ENCODE measurements at regions of chr10 and their contacts with region 1.

Region 1: DNA sequence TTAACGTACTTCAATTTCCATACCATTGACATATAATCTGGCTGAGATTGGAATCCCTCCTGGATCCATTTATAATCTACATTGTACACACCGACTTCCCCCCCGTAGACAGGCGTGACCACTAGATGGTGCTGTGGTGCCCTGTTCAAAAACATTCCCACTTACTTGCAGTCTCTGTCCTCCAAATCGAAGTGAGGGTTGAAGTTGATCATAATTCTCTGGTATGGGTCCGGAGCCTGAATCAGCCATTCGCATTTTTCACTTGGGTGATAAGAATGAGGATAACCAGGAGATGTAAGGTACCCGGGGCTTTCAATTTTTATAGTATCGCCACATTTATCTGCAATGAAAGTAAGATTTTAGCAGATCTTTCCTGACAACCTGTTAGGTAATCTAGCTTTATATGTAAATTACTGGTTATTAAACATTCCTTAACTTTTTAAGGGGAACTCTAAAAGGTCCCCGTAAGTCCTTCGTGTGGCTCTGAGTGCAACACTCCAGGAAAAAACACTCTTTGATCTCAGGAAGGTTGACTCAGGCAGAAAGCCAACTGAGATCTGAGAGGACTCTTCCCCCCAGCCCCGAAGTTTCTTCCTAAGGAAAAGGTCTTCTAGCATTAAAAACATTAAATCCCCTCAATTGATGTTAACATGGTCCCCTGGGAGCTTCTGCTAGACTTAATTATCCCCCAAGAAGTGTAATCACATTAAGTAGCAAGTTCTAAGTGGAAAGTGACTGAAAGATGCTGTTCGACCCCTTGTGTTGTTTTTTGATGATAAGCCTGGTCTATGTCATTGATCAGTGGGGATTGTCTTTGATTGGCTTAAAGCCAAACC is 3.7 kb downstream of the NRP1 start:
- DNase-seq: peak; percentile 85
- ATAC-seq: peak in 1 of 2 donors; percentile 14

Region 2: GRCh38 chr10:32713560-32713959 is 617.2 kb before region 1 on chr10:
- intact Hi-C with region 1: no loop called
- DNase-seq: no peak
- ATAC-seq: no peak

Region 3: DNA sequence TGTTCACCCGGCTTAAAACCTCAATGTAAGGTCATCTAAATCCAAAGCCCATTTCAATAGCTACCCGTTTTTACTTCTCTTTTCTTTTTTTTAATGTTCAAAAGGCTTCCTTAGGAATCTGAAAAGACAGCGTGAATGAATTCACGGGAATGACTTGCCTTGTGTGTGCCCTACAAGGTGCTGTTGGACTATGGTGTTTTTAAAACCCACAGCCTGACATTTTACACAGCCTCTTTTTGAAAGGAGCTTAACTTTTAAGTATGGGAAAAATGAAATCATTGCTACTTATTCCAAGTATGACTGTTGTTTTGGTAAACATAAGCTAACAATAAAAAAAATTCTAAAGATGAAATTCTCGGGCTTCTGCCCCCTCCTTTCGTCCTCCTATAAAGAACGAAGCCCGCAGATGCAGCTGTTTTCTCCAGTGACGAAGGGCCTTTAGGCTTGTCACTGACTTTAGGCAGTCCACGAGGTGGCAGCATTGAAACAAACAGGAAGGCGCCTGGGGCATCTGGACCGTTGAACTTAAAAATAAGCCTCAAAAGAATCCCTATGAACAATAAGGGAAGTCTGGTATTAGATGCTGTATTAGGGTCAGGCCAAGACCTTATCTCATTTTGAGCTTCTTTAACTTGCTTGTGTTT is 137.6 kb before region 1 on chr10:
- intact Hi-C with region 1: loop called in 1 of 2 experiments (anchors 2 kb)
- DNase-seq: peak; percentile 88
- ATAC-seq: peak; percentile 87 to 88

Region 4: GRCh38 chr10:33277135-33277536 is 53.6 kb before region 1 on chr10:
- intact Hi-C with region 1: loop called in 1 of 2 experiments (anchors 2 kb)
- DNase-seq: peak; percentile 82
- ATAC-seq: peak; percentile 23 to 72

Region 5: DNA sequence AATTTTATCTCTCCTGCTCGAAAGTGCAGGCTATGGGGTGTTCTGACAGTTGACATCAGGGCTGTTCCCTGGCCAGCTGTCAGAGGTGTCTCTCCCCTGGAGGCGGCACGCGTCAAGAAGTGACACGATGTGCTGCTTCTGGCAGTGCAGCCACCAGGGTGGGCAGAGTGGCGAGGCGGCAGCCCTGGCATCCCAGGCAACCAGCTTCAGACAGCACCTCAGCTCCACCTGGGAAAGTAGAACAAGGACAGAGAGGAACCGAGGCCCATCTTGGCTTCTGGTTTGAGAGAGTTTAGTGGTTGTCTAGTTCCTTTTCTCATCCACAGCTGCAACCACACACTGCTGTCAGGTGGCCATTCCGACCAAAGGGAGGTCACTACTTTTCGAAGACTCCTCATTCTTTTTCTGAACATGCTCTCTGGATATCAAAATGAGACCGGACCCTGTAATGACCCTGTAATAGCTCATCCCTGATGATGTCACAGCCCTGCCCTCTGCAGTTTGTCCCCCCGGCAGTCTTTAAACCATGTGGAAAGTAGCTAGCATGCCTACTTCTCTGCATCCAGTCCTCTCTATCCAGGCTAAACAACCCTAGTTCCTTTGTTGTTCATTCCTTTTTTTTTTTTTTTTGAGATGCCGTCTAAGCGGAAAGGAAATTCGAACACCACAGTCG is 384.7 kb after region 1 on chr10:
- intact Hi-C with region 1: loop called in 1 of 2 experiments (anchors 5 kb)
- DNase-seq: peak; percentile 37
- ATAC-seq: peak; percentile 78 to 90

Region 6: GRCh38 chr10:33801748-33802147 is 471.0 kb after region 1 on chr10:
- intact Hi-C with region 1: loop called (anchors 10 kb)
- DNase-seq: no peak
- ATAC-seq: no peak

Region 7: GRCh38 chr10:34637418-34637911 is 1306.7 kb after region 1 on chr10:
- intact Hi-C with region 1: loop called in 1 of 2 experiments (anchors 5 kb)
- DNase-seq: peak; percentile 67
- ATAC-seq: peak; percentile 59 to 63